ENCODE measurements at regions of chr19 and their contacts with region 1.

Region 1: DNA sequence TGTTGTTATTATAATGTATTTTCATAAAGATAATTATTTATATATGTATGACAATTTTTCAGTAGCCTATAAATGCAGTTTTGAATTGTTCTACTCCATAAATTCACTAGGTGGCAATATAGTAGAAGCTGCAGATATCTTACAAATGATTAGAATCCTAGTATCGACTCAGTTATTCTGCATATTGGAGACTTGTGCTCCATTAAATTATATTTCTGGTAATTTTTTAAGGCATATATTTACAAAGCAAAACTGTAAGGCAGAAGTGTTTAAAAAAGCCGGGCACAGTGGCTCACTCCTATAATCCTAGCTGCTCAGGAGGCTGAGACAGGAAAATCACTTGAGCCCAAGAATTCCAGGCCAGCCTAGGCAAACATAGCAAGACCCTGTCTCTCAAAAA is 58.7 kb downstream of the DPY19L3 start:
- DNase-seq: peak in 1 of 2 experiments; percentile 44
- ATAC-seq: peak; percentile 48 to 71; a peak in 4 of 6 replicates
- H3K4me3 ChIP-seq: no peak overlapping the region
- H3K27ac ChIP-seq: no peak overlapping the region
- H3K4me1 ChIP-seq: no peaks in the 10 kb centered on the region
- CTCF ChIP-seq: peak; percentile 83
- EP300 ChIP-seq: no peak
- POLR2A ChIP-seq: no peak
- RAD21 ChIP-seq: peak; percentile 68 to 70

Region 2: GRCh38 chr19:32442650-32443049 is 21.6 kb before region 1 on chr19:
- CTCF ChIA-PET with region 1: interaction called, 14 read pairs
- POLR2A ChIA-PET with region 1: no interaction called
- DNase-seq: no peak
- ATAC-seq: 0 out of 6 replicates have a peak, but pooled peaks of 1 of the 2 experiments have one; percentile 34
- H3K4me3 ChIP-seq: no peak overlapping the region
- H3K27ac ChIP-seq: no peak overlapping the region
- H3K4me1 ChIP-seq: no peaks in the 10 kb centered on the region
- CTCF ChIP-seq: no peak
- EP300 ChIP-seq: no peak
- POLR2A ChIP-seq: no peak
- RAD21 ChIP-seq: no peak

Region 3: GRCh38 chr19:32448026-32448425 is 16.3 kb before region 1 on chr19:
- CTCF ChIA-PET with region 1: interaction called, 10 read pairs
- POLR2A ChIA-PET with region 1: no interaction called
- DNase-seq: no peak
- ATAC-seq: no peak
- H3K4me3 ChIP-seq: no peak overlapping the region
- H3K27ac ChIP-seq: no peak overlapping the region
- H3K4me1 ChIP-seq: no peaks in the 10 kb centered on the region
- CTCF ChIP-seq: no peak
- EP300 ChIP-seq: no peak
- POLR2A ChIP-seq: no peak
- RAD21 ChIP-seq: no peak

Region 4: DNA sequence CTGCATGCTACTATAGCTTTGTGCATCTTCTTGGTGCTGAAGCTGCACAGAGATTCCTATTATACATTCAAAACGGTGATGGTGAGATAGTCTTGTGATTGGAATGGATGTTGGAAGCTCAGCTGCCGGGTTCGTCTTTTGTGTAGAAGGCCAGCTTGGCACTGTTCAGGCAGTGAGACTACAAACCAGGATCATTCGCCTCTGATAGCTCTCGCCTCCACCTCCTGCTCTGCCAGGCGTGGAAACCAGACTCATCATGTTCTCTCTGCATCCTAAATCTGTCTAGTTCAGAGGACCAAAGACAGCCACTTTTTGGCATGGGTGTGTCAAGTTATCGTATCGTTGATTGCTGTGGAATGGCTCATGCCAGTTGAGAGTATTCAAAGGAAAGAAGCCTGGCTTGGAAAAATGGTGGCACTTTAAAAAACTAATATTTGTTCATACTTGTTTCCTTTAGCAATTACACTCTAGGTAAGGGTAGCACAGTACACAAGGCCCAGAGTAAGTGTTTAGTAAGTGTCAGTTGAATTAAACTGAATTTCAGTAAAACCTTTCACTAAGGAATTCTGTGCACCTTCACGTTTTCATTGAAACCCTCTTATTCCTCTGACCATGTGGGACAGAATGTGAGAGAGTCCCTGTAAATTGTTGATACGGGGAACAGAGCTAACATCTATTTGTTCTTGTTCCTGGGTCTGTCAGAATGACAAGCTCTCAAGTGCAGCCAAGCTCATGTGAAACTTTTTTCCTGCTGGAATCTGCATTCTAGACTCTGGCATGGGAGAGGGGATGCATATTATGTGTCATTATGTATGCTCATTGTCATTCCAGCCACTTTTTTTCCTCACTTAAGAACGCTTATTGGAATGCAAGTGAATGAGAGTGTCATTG is 11.1 kb after region 1 on chr19:
- CTCF ChIA-PET with region 1: interaction called, 42 read pairs
- POLR2A ChIA-PET with region 1: no interaction called
- DNase-seq: no peak
- ATAC-seq: no peak
- H3K4me3 ChIP-seq: no peak overlapping the region
- H3K27ac ChIP-seq: no peak overlapping the region
- H3K4me1 ChIP-seq: no peaks in the 10 kb centered on the region
- CTCF ChIP-seq: no peak
- EP300 ChIP-seq: no peak
- POLR2A ChIP-seq: no peak
- RAD21 ChIP-seq: no peak

Measured in A549 (cell line).